Activated naive CD4-positive, alpha-beta T cell treated with anti-CD3 and anti-CD28 coated beads for 36 hours (primary cell): ENCODE measurements at regions of chr4 and their contacts with region 1.

Region 1: GRCh38 chr4:47485047-47485692 is at the start of gene ATP10D:
- DNase-seq: peak; percentile 82
- H3K4me3 Mint-ChIP-seq: peak within 1 kb of the TSS; percentile 93
- H3K27ac Mint-ChIP-seq: peak within 1 kb of the TSS; percentile 65
- H3K4me1 Mint-ChIP-seq: peaks cover 16% of the 10 kb centered on the region
- H3K27me3 Mint-ChIP-seq: no peaks in the 10 kb centered on the region
- total RNA-seq, gene ATP10D: 2.7 to 3.1 TPM

Region 2: DNA sequence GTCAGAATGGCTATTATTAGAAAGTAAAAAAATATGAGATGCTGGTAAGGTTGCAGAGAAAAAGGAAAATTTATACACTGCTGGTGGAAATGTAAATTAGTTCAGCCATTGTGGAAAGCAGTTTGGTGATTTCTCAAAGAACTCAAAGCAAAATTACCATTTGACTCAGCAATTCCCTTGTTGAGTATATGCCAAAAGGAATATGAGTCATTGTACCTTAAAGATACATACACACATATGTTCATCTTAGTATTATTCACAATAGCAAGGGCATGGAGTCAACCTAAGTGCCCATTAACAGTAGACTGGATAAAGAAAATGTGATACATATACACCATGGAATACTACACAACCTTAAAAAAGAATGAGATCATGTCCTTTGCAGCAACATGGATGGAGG is 169.8 kb before region 1 on chr4:
- CTCF ChIA-PET with region 1: no interaction called
- intact Hi-C with region 1: loop called (anchors 5 kb)
- DNase-seq: no peak
- H3K4me3 Mint-ChIP-seq: no peak overlapping the region
- H3K27ac Mint-ChIP-seq: no peak overlapping the region
- H3K4me1 Mint-ChIP-seq: peaks cover 2% of the 10 kb centered on the region
- H3K27me3 Mint-ChIP-seq: peaks cover 6% of the 10 kb centered on the region

Region 3: GRCh38 chr4:47406408-47406807 is 78.8 kb before region 1 on chr4:
- CTCF ChIA-PET with region 1: no interaction called
- intact Hi-C with region 1: no loop called
- DNase-seq: no peak
- H3K4me3 Mint-ChIP-seq: no peak overlapping the region
- H3K27ac Mint-ChIP-seq: no peak overlapping the region
- H3K4me1 Mint-ChIP-seq: no peaks in the 10 kb centered on the region
- H3K27me3 Mint-ChIP-seq: peaks cover 6% of the 10 kb centered on the region

Region 4: DNA sequence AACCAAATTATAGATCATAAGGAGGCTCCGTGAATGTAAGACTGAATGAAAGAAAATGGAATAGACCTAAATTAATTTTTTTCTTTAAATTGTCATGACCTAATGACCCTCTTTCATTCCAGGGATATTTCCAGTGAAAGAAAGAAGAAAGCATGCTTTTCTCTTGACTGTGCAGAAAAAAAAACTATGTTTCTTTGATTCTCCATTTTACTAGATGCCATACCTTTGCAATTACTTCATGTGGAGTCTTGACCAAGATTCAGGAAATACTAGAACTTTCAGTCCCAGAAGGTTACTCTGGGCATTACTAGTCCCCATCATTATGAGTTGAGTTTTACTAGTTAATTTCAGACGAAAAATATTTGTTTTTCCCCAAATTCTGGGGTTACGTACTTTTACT is 15.2 kb before region 1 on chr4:
- CTCF ChIA-PET with region 1: no interaction called
- intact Hi-C with region 1: no loop called
- DNase-seq: no peak
- H3K4me3 Mint-ChIP-seq: no peak overlapping the region
- H3K27ac Mint-ChIP-seq: no peak overlapping the region
- H3K4me1 Mint-ChIP-seq: no peaks in the 10 kb centered on the region
- H3K27me3 Mint-ChIP-seq: no peaks in the 10 kb centered on the region